Activated CD8-positive, alpha-beta T cell treated with anti-CD3 and anti-CD28 coated beads for 36 hours (primary cell): ENCODE measurements at regions of chr1 and their contacts with region 1.

Region 1: DNA sequence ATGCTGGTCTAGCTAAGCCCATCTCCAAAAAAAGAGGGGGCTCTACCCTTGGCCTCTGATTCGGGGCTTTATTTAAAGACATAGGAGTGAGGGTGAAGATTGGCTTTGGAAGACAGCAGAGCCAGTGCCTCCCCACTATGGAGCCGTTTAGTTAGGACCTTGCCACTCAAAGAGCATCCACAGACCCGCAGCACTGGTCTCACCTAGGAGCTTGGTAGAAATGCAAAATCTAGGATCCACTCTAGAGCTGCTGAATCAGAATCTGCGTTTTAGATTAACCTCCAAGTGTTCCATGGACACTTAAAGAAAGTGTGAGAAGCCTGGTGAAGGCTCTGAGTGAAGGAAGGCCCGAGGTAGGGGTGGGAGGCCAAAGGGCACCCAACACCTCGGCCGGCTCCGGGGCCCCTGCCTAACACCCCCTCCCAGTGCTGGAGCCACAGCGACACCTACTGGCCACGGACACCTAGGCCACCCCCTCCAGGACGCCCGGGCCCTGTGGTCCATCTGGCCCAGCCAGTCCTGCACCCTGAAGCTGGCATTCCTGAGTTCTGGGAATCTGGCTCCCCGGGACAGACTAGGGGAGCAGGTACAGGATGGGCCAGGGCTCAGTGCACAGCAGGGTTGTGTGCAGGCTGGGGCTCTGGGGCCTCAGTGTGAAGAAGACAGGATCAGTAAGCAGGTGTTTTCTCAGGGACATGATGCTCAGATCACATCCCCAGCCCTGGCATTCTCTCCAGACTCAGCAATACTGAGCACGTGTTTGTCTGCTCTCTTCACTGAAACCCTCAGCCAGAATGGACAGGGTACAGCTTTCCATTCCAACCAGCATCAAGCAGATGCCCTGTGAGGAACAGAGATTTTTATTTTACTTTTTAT is 79.2 kb downstream of the TMEM53 start:
- DNase-seq: peak; percentile 85
- ATAC-seq: peak; percentile 97
- H3K4me3 Mint-ChIP-seq: no peak overlapping the region
- H3K27ac Mint-ChIP-seq: no peak overlapping the region
- H3K4me1 Mint-ChIP-seq: no peaks in the 10 kb centered on the region
- H3K27me3 Mint-ChIP-seq: no peaks in the 10 kb centered on the region
- CTCF ChIP-seq: peak; percentile 98

Region 2: DNA sequence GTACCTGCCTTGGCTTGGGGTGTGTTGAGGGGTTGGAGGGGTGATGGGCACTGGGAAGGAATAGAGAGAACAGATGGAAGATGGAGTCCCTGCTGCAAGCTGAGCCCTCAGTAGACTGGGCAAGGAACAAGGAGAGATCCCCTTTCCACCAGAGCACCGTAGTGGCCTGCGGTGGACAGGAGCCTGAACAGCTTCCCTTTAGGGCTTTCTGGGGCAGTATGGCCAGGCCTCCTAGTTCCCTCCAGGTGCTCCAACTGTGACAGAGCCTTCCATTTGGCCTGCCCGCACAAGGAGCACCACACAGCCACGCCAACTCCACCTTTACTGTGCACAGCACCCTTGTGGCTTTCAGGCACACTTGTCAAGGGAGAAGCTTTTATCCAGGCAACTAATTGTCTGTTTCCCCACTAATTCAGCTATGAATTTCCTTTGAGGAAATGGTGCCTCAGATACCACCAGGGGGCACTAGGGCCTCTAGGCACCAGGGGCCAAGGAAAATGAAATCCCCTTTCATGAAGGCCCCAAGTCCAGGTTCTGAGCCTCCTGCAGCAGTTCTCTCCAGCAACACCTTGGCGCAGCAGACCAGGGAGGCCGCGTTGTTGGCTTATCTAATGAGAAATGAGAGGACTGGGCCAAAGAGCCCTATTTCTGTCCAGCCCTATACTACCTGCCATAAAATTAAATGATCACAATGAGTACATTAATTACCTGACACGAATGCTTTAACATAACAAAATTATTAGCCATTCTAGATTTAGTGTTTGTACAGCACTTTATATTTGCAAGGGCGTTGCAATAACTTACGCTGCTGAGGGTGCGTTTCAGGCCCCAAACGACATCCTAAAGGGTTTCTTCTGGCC is 217.0 kb before region 1 on chr1:
- CTCF ChIA-PET with region 1: interaction called, 79 read pairs
- POLR2A ChIA-PET with region 1: no interaction called
- intact Hi-C with region 1: loop called (anchors 2 kb)
- DNase-seq: peak; percentile 75
- ATAC-seq: peak; percentile 60
- H3K4me3 Mint-ChIP-seq: no peak overlapping the region
- H3K27ac Mint-ChIP-seq: no peak overlapping the region
- H3K4me1 Mint-ChIP-seq: no peaks in the 10 kb centered on the region
- H3K27me3 Mint-ChIP-seq: peaks cover 1% of the 10 kb centered on the region
- CTCF ChIP-seq: peak; percentile 73

Region 3: DNA sequence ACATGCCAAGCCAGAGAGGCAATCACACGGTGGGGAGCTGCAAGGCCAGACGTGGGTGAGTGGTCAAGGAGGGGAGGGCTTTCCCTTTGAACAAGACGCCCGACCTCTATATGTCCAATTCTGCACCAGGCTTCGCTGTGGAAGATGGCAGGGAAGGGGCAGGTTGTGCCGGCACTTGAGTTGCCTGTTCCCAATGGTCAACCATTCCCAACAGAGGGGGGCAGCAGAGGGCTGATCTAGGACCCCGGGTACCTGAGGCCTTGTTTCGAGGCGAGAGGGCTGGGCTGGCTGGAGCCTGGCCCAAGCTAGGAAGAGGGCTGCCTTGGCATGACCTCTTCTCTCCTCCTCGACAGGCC is 14.3 kb after region 1 on chr1:
- CTCF ChIA-PET with region 1: interaction called, 49 read pairs
- POLR2A ChIA-PET with region 1: no interaction called
- intact Hi-C with region 1: no loop called
- DNase-seq: peak; percentile 62
- ATAC-seq: no peak
- H3K4me3 Mint-ChIP-seq: no peak overlapping the region
- H3K27ac Mint-ChIP-seq: no peak overlapping the region
- H3K4me1 Mint-ChIP-seq: no peaks in the 10 kb centered on the region
- H3K27me3 Mint-ChIP-seq: no peaks in the 10 kb centered on the region
- CTCF ChIP-seq: peak; percentile 27

Region 4: GRCh38 chr1:44874155-44874554 is 279.0 kb after region 1 on chr1:
- CTCF ChIA-PET with region 1: no interaction called
- POLR2A ChIA-PET with region 1: no interaction called
- intact Hi-C with region 1: no loop called
- DNase-seq: no peak
- ATAC-seq: no peak
- H3K4me3 Mint-ChIP-seq: no peak overlapping the region
- H3K27ac Mint-ChIP-seq: no peak overlapping the region
- H3K4me1 Mint-ChIP-seq: no peaks in the 10 kb centered on the region
- H3K27me3 Mint-ChIP-seq: no peaks in the 10 kb centered on the region
- CTCF ChIP-seq: no peak